ENCODE measurements at regions of chr9 and their contacts with region 1.

Region 1: DNA sequence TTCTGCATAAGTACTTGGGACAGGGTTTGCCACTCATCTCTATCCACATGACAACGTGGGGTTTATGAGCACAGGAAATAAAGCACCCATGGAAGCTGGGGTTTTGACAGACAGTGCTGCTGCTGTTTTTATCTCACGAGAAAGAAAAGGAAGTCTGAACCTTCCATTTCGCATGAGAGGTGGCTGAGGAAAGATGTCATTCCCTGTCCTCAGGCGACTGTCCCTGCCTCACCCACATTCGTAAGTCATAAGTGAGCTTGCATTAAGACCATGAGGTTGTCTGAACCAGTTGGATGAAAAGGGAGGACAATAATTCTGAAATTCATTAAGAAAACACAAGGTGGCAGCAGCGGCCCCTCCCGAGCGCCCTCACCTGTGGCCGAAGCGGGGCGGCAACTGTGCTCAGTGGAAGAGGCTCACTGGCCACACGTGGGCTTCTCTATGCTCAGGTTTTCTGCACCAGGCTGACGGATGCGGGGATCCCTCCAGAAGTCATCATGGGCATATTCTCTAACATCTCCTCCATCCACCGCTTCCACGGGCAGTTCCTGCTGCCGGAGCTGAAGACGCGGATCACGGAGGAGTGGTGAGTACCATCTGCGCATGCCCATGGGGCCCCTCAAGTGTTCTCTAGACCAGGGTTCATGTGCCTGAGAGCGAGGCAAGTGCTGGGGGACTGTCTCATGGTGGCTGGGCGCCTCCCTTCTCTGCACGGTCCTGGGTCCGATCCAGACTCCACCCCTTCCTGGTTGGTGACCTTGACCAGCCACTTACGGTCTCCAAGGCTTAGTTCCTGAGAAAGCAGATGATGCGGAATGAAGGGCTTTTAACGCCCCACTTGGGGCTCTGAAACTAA is 54.7 kb upstream of the SUSD3 start:
- DNase-seq: peak; percentile 44 to 45
- ATAC-seq: peak; percentile 55 to 88 (median 80)
- H3K4me3 ChIP-seq: peak overlapping the region in 7 of 10 donors; percentile 10 to 40 (median 28)
- H3K27ac ChIP-seq: no peak overlapping the region
- H3K4me1 ChIP-seq: peaks cover 0 to 13% (median 7%) of the 10 kb centered on the region in 9 donors
- H3K27me3 ChIP-seq: no peaks in the 10 kb centered on the region
- CTCF ChIP-seq: peak; percentile 45 to 79 (median 72)

Region 2: GRCh38 chr9:93064392-93065134 is 60.8 kb after region 1 on chr9:
- intact Hi-C with region 1: loop called in 1 of 10 experiments (anchors 10 kb)
- DNase-seq: no peak
- ATAC-seq: peak in 7 of 8 donors; percentile 32 to 59 (median 37)
- H3K4me3 ChIP-seq: no peak overlapping the region
- H3K27ac ChIP-seq: peak overlapping the region in 1 of 10 donors; percentile 45
- H3K4me1 ChIP-seq: peaks cover 0 to 65% (median 6%) of the 10 kb centered on the region in 9 donors
- H3K27me3 ChIP-seq: peaks cover 0 to 7% (median 0%) of the 10 kb centered on the region in 7 donors
- CTCF ChIP-seq: no peak

Region 3: GRCh38 chr9:93095205-93096130 is 91.7 kb after region 1 on chr9:
- intact Hi-C with region 1: loop called in 2 of 10 experiments (anchors 5 to 10 kb)
- DNase-seq: peak; percentile 100
- ATAC-seq: peak; percentile 85 to 94 (median 90)
- H3K4me3 ChIP-seq: peak overlapping the region; percentile 4 to 100 (median 97)
- H3K27ac ChIP-seq: peak overlapping the region; percentile 91 to 99 (median 96)
- H3K4me1 ChIP-seq: peaks cover 18 to 71% (median 59%) of the 10 kb centered on the region in 9 donors
- H3K27me3 ChIP-seq: no peaks in the 10 kb centered on the region
- CTCF ChIP-seq: no peak

Region 4: DNA sequence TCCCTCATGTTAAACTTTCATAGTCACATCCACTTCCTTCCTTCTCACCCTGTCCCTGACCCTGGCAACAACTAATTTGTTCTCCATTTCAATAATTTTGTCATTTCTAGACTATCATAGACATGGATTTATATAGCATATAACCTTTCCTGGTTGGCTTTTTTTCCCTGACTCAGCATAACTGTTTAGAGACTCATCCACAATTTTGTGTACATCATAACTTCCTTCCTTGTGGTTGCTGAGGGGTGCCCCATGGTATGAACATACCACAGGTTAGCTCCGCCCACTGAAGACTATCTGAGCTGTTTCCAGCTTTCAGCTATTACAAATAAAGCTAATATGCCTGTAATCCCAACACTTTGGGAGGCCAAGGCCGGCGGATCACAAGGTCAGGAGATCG is 709.9 kb after region 1 on chr9:
- intact Hi-C with region 1: no loop called
- DNase-seq: no peak
- ATAC-seq: no peak
- H3K4me3 ChIP-seq: no peak overlapping the region
- H3K27ac ChIP-seq: no peak overlapping the region
- H3K4me1 ChIP-seq: peaks cover 0 to 2% (median 0%) of the 10 kb centered on the region in 9 donors
- H3K27me3 ChIP-seq: peaks cover 0 to 6% (median 0%) of the 10 kb centered on the region in 7 donors
- CTCF ChIP-seq: no peak

Region 5: DNA sequence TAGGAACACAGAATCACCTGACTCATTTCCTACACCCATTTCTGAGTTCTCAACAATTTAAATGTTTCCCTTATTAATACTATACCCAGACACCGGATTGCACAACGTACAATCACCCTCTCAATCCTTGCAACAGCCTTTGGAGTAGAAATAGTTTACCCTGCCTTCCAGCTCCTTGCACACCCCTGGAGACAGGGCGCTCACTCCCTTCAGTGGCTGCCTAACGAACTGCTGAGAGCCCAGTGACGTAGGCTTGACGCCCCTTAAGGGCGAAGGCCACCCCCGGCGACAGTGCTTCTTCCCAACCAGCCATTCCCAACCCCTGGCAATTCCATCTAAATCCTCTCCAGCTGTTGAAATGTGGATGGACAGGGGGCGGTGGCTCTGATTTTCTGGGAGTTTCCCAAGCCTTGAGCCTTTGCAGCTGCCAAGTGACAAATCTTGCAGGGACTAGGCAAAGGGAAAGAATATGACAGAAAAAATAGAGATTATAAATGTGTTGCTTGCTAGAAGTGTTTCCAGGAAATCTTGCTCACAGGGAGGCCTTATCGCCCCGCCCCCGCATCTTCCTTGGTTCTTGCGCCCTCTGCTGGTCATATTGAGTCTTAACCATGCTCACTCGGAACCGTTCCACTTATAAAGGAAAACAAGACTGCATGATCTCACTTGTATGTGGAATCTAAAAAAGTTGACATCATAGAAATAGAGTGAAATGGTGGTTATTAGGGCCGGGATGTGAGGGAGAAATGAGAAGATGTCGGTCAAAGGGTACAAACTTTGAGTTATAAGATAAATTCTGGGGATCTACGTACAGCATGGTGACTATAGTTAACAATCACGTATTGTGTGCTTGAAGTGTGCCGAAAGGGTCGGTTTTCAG is 959.0 kb after region 1 on chr9:
- intact Hi-C with region 1: loop called in 1 of 10 experiments (anchors 5 kb)
- DNase-seq: peak; percentile 66 to 85
- ATAC-seq: peak; percentile 71 to 90 (median 82)
- H3K4me3 ChIP-seq: no peak overlapping the region
- H3K27ac ChIP-seq: no peak overlapping the region
- H3K4me1 ChIP-seq: peaks cover 16 to 36% (median 31%) of the 10 kb centered on the region in 9 donors
- H3K27me3 ChIP-seq: peaks cover 33 to 78% (median 71%) of the 10 kb centered on the region in 7 donors
- CTCF ChIP-seq: peak; percentile 82 to 90 (median 87)

Region 6: DNA sequence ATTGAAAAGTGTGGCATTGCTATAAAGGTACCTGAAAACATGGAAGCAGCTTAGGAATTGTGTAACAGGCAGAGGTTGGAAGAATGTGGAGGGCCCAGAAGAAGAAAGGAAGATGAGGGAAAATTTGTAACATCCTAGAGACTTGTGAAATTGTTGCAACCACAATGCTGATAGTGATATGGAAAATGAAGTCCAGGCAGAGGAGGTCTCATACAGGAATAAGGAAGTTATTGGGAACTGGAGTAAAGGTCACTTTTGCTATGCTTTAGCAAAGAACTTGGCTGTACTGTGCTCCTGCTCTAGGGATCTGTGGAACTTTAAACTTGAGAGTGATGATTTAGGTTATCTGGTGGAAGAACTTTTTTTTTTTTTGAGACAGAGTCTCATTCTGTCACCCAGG is 1124.0 kb after region 1 on chr9:
- intact Hi-C with region 1: no loop called
- DNase-seq: no peak
- ATAC-seq: no peak
- H3K4me3 ChIP-seq: no peak overlapping the region
- H3K27ac ChIP-seq: no peak overlapping the region
- H3K4me1 ChIP-seq: no peaks in the 10 kb centered on the region
- H3K27me3 ChIP-seq: no peaks in the 10 kb centered on the region
- CTCF ChIP-seq: no peak